ENCODE measurements at regions of chr2 and their contacts with region 1.

Region 1: GRCh38 chr2:143284087-143284675 is 155.0 kb downstream of the ARHGAP15 start:
- DNase-seq: peak in 4 of 9 experiments; percentile 12 to 73 (median 46)
- ATAC-seq: peak; percentile 88
- H3K4me3 ChIP-seq: no peak overlapping the region
- H3K4me3 Mint-ChIP-seq: no peak overlapping the region
- H3K27ac ChIP-seq: no peak overlapping the region
- H3K27ac Mint-ChIP-seq: no peak overlapping the region
- H3K4me1 ChIP-seq: no peaks in the 10 kb centered on the region
- H3K4me1 Mint-ChIP-seq: peaks cover 55% of the 10 kb centered on the region
- H3K27me3 ChIP-seq: no peaks in the 10 kb centered on the region
- H3K27me3 Mint-ChIP-seq: no peaks in the 10 kb centered on the region
- CTCF ChIP-seq: peak; percentile 77

Region 2: GRCh38 chr2:143034292-143035074 is 249.7 kb before region 1 on chr2:
- CTCF ChIA-PET with region 1: interaction called, 7 read pairs
- POLR2A ChIA-PET with region 1: no interaction called
- intact Hi-C with region 1: loop called in 1 of 2 experiments (anchors 1 kb)
- DNase-seq: peak in 8 of 9 experiments; percentile 32 to 88 (median 56)
- ATAC-seq: peak; percentile 100
- H3K4me3 ChIP-seq: no peak overlapping the region
- H3K4me3 Mint-ChIP-seq: no peak overlapping the region
- H3K27ac ChIP-seq: no peak overlapping the region
- H3K27ac Mint-ChIP-seq: no peak overlapping the region
- H3K4me1 ChIP-seq: no peaks in the 10 kb centered on the region
- H3K4me1 Mint-ChIP-seq: no peaks in the 10 kb centered on the region
- H3K27me3 ChIP-seq: no peaks in the 10 kb centered on the region
- H3K27me3 Mint-ChIP-seq: peaks cover 6% of the 10 kb centered on the region
- CTCF ChIP-seq: peak; percentile 99

Region 3: DNA sequence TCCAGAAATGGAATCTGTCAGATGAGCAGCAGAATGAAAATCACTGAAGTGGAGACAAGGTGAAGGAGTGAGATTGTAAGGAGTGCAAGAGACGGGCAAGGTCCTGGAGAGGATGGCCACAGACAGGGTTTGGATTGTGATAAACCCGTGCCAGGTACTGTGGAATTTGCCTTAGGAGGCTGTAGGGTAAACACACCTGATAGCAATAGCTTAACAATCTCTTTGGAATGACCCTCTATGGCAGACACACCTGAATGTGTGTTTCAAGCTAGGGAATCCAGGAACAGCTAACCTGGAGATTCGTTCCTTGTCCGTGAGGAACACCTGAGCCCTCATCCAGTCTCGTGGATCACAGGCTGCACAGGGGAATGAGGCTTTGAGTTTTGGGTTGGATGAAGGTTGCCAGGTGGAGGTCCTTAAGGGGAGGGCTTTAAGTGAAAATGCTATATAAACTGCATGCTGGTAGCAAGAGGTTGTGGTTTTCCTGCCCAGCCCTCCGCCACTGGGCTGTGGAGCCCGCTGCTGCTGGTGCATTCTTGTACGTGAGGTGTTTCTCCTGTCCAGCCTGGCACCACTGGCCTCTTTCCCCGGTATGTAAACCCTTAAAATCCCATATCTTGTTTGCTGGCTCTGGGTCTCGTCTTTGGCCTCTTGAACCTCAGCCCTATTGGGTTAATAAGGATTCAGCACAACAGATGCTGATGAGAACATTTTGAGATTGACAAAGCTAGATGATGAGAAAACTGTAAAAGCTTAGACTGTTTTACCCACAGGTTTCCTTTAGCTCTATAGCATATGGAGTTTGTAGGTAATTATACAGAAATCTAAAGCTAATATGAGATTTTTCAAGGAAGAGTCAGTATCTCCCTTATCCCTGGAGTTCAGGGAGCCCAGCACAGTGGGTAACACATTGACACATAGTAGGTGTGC is 37.1 kb before region 1 on chr2:
- CTCF ChIA-PET with region 1: no interaction called
- POLR2A ChIA-PET with region 1: no interaction called
- intact Hi-C with region 1: no loop called
- DNase-seq: peak in 6 of 9 experiments; percentile 16 to 68 (median 42)
- ATAC-seq: peak; percentile 60
- H3K4me3 ChIP-seq: peak overlapping the region; percentile 19 to 52
- H3K4me3 Mint-ChIP-seq: no peak overlapping the region
- H3K27ac ChIP-seq: peak overlapping the region; percentile 2 to 70
- H3K27ac Mint-ChIP-seq: no peak overlapping the region
- H3K4me1 ChIP-seq: peaks cover 28% of the 10 kb centered on the region
- H3K4me1 Mint-ChIP-seq: peaks cover 24% of the 10 kb centered on the region
- H3K27me3 ChIP-seq: no peaks in the 10 kb centered on the region
- H3K27me3 Mint-ChIP-seq: no peaks in the 10 kb centered on the region
- CTCF ChIP-seq: no peak

Region 4: DNA sequence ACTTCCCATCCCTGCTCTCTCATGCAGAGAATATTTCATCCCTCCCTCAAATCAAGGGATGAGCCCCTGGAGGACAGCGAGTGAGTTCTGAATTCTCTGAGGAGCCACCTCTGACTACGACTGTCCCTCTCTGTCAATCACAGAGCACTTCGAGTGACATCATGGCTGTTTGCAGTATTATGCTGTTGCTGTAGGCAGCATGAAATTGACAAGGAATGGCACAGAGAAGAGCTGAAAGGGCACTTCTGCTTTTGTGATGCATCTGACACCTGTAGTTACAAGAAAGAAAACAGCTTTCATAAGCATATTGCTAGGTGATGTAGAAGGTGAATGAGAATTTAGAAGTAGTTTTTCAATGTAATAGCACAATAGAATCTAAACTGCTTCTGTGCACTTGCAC is 11.9 kb after region 1 on chr2:
- CTCF ChIA-PET with region 1: interaction called, 7 read pairs
- POLR2A ChIA-PET with region 1: no interaction called
- intact Hi-C with region 1: loop called in 1 of 2 experiments (anchors 2 kb)
- DNase-seq: no peak
- ATAC-seq: no peak
- H3K4me3 ChIP-seq: no peak overlapping the region
- H3K4me3 Mint-ChIP-seq: no peak overlapping the region
- H3K27ac ChIP-seq: no peak overlapping the region
- H3K27ac Mint-ChIP-seq: no peak overlapping the region
- H3K4me1 ChIP-seq: no peaks in the 10 kb centered on the region
- H3K4me1 Mint-ChIP-seq: peaks cover 54% of the 10 kb centered on the region
- H3K27me3 ChIP-seq: no peaks in the 10 kb centered on the region
- H3K27me3 Mint-ChIP-seq: no peaks in the 10 kb centered on the region
- CTCF ChIP-seq: no peak

Region 5: DNA sequence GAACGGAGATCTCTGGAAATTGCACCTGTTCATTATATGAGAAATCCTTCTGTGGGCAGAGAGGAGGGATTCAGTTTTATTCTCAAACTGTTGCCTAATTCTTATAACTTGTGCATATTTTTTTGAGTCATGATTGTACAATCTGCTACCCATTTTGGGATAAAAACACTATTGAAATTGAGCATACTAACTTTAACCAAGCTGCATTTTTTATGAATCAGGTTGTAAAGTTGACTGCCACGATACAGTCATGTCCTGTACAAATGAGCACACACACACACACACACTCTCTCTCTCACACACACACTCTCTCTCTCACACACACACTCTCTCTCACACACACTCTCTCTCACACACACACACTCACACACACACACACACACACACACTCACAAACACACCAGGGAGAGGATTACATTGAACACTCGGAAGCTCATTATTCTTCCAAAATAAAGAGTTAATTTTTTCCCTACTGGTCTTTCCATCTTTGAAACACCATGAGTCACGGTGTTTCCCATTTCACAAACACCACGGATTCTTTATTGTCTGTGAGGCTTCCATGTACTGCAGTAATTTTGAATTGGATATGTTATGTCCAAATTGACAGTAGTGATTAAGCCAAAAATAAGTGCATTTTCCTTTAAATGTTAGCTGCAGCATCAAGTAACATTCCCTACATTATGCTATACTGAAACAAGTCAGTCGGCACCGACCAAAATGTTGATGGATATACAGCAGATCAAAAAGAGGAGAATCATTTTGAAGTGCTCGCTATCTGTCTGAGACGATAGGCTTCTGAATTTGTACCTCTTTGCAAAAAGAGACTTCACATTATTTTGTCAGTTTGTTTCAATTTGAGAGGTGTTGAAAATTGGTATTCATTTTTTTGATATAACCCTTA is 62.0 kb after region 1 on chr2:
- CTCF ChIA-PET with region 1: no interaction called
- POLR2A ChIA-PET with region 1: no interaction called
- intact Hi-C with region 1: loop called in 1 of 2 experiments (anchors 5 kb)
- DNase-seq: no peak
- ATAC-seq: no peak
- H3K4me3 ChIP-seq: no peak overlapping the region
- H3K4me3 Mint-ChIP-seq: no peak overlapping the region
- H3K27ac ChIP-seq: no peak overlapping the region
- H3K27ac Mint-ChIP-seq: no peak overlapping the region
- H3K4me1 ChIP-seq: no peaks in the 10 kb centered on the region
- H3K4me1 Mint-ChIP-seq: peaks cover 50% of the 10 kb centered on the region
- H3K27me3 ChIP-seq: no peaks in the 10 kb centered on the region
- H3K27me3 Mint-ChIP-seq: no peaks in the 10 kb centered on the region
- CTCF ChIP-seq: no peak

Measured in CD8-positive, alpha-beta T cell (primary cell).